Ovary (tissue), 10 donors: ENCODE measurements at regions of chr6 and their contacts with region 1.

Region 1: DNA sequence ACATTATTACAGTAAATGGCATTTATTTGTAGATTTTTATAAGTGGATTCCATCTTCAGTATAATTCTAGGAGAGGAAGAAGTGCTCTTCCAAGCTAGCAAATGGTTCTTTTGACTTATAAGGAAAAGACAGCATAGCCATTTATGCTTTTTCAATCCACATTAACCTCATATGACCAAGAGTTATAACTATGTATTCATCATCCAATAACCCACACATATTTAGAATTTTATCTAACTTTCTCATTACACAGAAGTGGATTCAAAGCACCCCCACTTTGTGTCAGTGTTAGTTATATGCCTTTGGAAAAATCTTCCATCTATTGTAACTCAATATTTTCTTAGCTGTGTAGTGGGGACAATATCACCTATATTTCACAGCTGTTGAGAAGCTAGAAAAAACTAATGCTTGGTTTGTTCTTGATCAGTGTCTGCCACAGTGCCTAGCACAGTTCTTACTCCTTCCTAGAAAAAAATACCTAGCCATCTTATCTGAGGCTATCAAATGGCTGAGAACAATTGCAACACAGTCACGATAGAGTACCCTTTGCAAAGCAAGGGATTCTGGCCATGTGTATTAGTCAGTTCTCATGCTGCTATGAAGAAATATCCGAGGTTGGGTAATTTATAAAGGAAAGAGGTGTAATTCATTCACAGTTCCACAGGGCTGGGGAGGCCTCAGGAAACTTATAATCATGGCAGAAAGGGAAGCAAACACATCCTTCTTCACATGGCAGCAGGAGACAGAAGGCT is 986.3 kb downstream of the TFAP2A start:
- DNase-seq: no peak
- H3K4me3 ChIP-seq: no peak overlapping the region
- H3K27ac ChIP-seq: no peak overlapping the region
- H3K4me1 ChIP-seq: no peaks in the 10 kb centered on the region
- H3K27me3 ChIP-seq: no peaks in the 10 kb centered on the region
- CTCF ChIP-seq: no peak
- EP300 ChIP-seq: no peak
- POLR2A ChIP-seq: no peak

Region 2: DNA sequence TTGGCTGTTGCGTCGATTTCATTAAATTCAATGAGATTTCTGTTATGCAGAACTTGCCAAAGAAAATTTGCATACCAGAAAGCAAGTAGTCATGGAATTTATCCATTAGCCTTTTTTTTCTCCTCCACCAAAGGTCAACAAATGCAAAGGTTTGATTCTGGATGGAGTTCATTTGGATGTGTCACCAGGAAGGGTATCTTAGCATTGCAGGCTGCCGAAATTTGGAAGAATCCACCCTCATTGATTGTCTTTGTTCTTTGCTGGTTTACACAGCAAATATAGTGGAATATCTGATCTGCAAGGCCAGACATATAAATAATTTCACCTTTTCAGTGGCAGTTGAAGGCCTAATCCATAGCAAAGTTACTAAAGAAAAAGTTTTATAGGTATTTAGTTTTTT is 763.9 kb before region 1 on chr6:
- intact Hi-C with region 1: loop called in 1 of 4 experiments (anchors 10 kb)
- DNase-seq: no peak
- H3K4me3 ChIP-seq: no peak overlapping the region
- H3K27ac ChIP-seq: no peak overlapping the region
- H3K4me1 ChIP-seq: no peaks in the 10 kb centered on the region
- H3K27me3 ChIP-seq: no peaks in the 10 kb centered on the region
- CTCF ChIP-seq: no peak
- EP300 ChIP-seq: no peak
- POLR2A ChIP-seq: no peak

Region 3: DNA sequence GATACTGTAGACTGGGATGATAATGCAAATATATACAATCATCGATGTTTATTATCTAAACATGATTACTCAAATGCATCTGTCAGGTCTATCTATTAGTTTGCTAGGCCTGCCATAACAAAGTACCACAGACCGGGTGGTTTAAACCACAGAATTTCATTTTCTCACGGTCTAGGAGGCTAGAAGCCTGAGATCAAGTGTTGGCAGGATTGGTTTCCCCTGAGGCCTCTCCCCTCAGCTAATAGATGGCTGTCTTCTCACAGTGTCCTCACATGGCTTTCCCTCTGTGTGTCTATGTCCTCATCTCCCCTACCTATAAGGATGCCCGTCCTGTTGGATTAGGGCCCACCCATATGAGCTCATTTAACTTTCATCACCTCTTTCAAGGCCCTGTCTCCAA is 480.7 kb before region 1 on chr6:
- intact Hi-C with region 1: no loop called
- DNase-seq: no peak
- H3K4me3 ChIP-seq: no peak overlapping the region
- H3K27ac ChIP-seq: no peak overlapping the region
- H3K4me1 ChIP-seq: no peaks in the 10 kb centered on the region
- H3K27me3 ChIP-seq: no peaks in the 10 kb centered on the region
- CTCF ChIP-seq: no peak
- EP300 ChIP-seq: no peak
- POLR2A ChIP-seq: no peak

Region 4: DNA sequence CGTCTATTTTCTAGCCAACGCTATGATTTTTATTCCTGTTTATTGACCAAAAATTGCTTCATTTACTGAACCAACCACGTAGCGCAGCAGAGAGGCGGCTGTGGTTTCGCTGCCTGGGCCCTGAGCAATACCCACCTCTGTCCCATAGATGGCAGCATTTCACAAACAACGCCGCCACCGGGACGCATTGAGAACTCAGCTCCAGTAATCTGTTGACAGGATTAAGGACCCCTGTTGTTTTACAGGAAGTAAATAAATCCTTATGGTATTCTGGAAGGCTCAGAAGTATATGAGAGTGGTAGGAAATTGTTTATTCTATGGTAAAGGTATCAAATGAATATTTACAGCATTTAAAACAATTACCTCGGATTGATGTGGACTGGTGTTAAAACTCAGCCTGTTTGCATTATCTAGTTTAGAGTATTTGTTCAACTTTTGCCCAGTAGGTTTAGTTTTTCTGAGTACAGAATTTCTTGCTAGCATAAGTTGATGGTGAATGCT is 445.4 kb before region 1 on chr6:
- intact Hi-C with region 1: no loop called
- DNase-seq: peak; percentile 12 to 47 (median 37)
- H3K4me3 ChIP-seq: no peak overlapping the region
- H3K27ac ChIP-seq: no peak overlapping the region
- H3K4me1 ChIP-seq: no peaks in the 10 kb centered on the region
- H3K27me3 ChIP-seq: no peaks in the 10 kb centered on the region
- CTCF ChIP-seq: peak; percentile 23 to 57 (median 56)
- EP300 ChIP-seq: no peak
- POLR2A ChIP-seq: no peak

Region 5: DNA sequence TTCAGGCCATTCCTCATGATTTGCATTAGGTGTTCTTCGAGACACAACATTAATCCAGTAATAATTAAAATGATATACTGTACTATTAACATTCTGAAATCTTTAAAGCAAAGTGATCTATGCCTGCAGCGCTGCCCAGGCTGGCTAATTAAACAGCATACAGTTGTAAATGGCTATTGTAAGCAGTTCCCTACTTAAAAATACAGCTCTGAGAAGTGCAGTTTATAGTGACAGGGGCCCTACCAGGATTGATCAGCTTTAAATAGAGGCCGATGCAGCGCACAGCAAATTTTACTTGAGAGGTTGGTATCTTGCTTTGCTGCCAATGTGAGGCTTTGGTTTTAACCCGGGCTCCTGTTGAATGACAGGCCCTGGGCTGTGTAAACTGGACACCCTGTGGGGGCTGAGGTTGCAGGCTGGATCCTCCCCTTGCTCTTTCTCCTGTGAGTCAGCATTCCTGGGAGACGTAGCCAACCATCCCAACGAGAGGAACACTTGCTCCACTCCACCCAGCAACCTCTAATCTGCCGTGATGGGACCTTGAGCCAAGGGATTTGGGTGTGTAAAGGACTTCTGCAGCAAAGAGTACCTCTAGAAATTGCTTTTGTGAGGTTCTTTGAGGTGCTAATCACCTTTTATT is 87.5 kb after region 1 on chr6:
- intact Hi-C with region 1: no loop called
- DNase-seq: no peak
- H3K4me3 ChIP-seq: no peak overlapping the region
- H3K27ac ChIP-seq: no peak overlapping the region
- H3K4me1 ChIP-seq: no peaks in the 10 kb centered on the region
- H3K27me3 ChIP-seq: no peaks in the 10 kb centered on the region
- CTCF ChIP-seq: no peak
- EP300 ChIP-seq: no peak
- POLR2A ChIP-seq: no peak